ENCODE measurements at regions of chr5 and their contacts with region 1.

Region 1: DNA sequence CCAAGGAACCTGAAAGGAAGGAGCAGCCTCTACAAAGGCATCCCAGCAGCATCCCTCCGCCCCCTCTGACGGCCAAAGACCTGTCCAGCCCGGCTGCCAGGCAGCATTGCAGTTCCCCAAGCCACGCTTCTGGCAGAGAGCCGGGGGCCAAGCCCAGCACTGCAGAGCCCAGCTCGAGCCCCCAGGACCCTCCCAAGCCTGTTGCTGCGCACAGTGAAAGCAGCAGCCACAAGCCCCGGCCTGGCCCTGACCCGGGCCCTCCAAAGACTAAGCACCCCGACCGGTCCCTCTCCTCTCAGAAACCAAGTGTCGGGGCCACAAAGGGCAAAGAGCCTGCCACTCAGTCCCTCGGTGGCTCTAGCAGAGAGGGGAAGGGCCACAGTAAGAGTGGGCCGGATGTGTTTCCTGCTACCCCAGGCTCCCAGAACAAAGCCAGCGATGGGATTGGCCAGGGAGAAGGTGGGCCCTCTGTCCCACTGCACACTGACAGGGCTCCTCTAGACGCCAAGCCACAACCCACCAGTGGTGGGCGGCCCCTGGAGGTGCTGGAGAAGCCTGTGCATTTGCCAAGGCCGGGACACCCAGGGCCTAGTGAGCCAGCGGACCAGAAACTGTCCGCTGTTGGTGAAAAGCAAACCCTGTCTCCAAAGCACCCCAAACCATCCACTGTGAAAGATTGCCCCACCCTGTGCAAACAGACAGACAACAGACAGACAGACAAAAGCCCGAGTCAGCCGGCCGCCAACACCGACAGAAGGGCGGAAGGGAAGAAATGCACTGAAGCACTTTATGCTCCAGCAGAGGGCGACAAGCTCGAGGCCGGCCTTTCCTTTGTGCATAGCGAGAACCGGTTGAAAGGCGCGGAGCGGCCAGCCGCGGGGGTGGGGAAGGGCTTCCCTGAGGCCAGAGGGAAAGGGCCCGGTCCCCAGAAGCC is 30.8 kb downstream of the CD180 start:
- DNase-seq: peak; percentile 65 to 88 (median 81)
- H3K4me3 ChIP-seq: peak overlapping the region; percentile 68
- H3K4me3 Mint-ChIP-seq: peak overlapping the region; percentile 88 to 97 (median 95)
- H3K27ac ChIP-seq: peak overlapping the region; percentile 69
- H3K27ac Mint-ChIP-seq: peak overlapping the region; percentile 96 to 100 (median 99)
- H3K4me1 ChIP-seq: peaks cover 69% of the 10 kb centered on the region
- H3K4me1 Mint-ChIP-seq: peaks cover 55 to 78% (median 67%) of the 10 kb centered on the region in 3 donors
- H3K27me3 ChIP-seq: no peaks in the 10 kb centered on the region
- H3K27me3 Mint-ChIP-seq: no peaks in the 10 kb centered on the region

Region 2: DNA sequence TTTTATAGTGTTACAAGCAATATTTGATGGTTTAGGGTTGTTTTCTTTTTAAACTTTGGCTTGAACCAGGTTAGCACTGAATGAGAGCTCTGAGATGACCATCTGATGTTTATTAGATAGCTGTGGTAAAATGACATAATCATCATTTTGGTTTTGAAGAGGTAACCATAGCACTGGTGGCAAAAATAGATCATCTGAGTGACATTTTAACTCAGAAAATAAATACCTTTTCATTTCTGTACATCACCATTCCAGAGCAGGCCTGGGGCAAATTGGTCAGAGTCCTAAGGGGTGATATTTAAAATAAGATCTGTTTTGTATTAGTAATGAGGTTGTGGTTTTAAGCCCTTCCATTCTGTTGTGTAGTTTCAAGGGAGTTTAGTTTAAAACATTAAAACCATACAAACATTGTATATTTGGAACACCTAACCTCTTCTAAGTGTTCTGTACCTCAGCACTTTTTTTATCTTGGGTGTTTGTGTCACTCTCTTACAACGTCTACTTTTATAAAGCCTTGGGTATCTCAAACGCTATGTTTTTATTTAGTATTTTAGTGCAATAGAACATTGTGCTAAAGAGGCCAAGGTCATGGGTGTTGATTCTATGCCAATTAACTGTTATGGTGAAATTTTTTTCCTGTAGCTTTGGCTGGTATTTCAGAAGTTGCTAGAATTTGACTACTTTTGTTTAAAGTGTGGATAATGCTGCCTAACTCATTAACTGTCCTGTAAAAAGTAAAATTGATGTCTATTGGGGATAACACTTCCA is 135.3 kb before region 1 on chr5:
- CTCF ChIA-PET with region 1: no interaction called
- POLR2A ChIA-PET with region 1: no interaction called
- DNase-seq: no peak
- H3K4me3 ChIP-seq: no peak overlapping the region
- H3K4me3 Mint-ChIP-seq: no peak overlapping the region
- H3K27ac ChIP-seq: no peak overlapping the region
- H3K27ac Mint-ChIP-seq: peak overlapping the region in 1 of 8 donors; percentile 34
- H3K4me1 ChIP-seq: no peaks in the 10 kb centered on the region
- H3K4me1 Mint-ChIP-seq: peaks cover 13 to 32% (median 20%) of the 10 kb centered on the region in 3 donors
- H3K27me3 ChIP-seq: no peaks in the 10 kb centered on the region
- H3K27me3 Mint-ChIP-seq: no peaks in the 10 kb centered on the region

Region 3: DNA sequence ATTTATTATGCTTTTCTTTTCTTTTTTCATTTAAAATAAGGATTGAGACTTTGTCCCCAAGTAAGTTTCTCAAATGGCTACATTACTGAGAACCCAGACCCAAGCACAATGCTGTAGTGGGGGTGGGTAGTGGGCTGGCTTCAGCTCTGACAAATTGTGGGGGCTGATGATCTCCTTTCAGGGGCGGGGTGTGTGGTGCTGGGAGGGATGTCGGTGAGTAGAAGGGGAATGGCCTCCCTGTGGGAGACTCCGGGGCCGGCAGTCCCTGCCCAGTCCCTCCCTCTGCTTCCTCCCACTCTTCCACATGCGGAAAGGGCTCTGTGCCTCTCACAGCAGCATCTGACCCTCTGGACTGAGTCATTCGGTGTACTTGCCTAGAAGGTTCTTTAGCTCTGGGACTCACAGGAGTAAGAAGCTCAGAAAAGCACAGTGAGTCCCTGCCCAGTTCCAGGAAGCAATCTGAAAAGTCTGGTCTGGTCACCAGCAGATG is 16.6 kb after region 1 on chr5:
- CTCF ChIA-PET with region 1: interaction called, 16 read pairs
- POLR2A ChIA-PET with region 1: interaction called, 3 read pairs
- DNase-seq: no peak
- H3K4me3 ChIP-seq: no peak overlapping the region
- H3K4me3 Mint-ChIP-seq: peak overlapping the region in 3 of 7 donors; percentile 11 to 57 (median 40)
- H3K27ac ChIP-seq: no peak overlapping the region
- H3K27ac Mint-ChIP-seq: peak overlapping the region in 3 of 8 donors; percentile 17 to 26 (median 26)
- H3K4me1 ChIP-seq: peaks cover 31% of the 10 kb centered on the region
- H3K4me1 Mint-ChIP-seq: peaks cover 32 to 58% (median 43%) of the 10 kb centered on the region in 3 donors
- H3K27me3 ChIP-seq: no peaks in the 10 kb centered on the region
- H3K27me3 Mint-ChIP-seq: no peaks in the 10 kb centered on the region

Region 4: DNA sequence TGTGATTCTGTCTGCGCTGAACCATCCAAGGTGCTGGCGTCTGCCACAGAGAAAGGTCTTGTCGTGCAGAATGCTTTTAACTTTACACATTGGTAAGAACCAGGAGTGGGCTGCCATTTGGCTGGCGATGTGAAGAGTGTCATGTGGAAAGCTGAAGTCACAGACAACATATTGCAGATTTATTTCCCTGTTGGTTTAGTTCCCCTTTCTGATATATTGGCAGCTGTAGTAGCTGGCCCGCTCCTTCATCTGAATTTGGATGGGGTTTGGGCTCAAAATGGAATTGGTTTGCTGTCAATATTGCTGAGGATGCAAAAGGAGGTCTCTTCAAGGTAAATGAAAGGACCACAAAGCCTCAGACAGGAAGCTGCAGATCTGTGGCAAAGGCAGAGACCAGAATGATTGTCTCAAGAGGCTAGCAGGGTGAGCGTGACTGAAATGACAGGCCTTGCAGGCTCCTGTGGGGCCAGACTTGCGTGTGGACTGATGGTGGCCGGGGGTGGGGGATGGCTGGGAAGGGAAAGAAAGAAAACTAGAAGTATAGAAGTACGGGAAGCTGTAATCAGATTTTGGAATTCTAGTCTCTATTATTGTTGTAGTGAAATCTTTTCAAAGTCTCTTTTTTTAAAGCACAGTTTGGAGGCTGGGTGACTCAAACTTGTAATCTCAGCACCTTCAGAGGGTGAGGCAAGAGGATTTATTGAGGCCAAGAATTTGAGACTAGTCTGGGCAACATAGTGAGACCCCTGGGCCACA is 55.9 kb after region 1 on chr5:
- CTCF ChIA-PET with region 1: interaction called, 12 read pairs
- POLR2A ChIA-PET with region 1: interaction called, 3 read pairs
- DNase-seq: peak; percentile 18 to 70 (median 57)
- H3K4me3 ChIP-seq: peak overlapping the region; percentile 11
- H3K4me3 Mint-ChIP-seq: peak overlapping the region; percentile 22 to 83 (median 75)
- H3K27ac ChIP-seq: no peak overlapping the region
- H3K27ac Mint-ChIP-seq: peak overlapping the region; percentile 86 to 100 (median 92)
- H3K4me1 ChIP-seq: peaks cover 55% of the 10 kb centered on the region
- H3K4me1 Mint-ChIP-seq: peaks cover 56 to 67% (median 63%) of the 10 kb centered on the region in 3 donors
- H3K27me3 ChIP-seq: no peaks in the 10 kb centered on the region
- H3K27me3 Mint-ChIP-seq: peaks cover 0 to 4% of the 10 kb centered on the region in 2 donors

Measured in CD8-positive, alpha-beta memory T cell (primary cell).